Activated T-helper 2 cell treated with anti-CD3 and anti-CD28 coated beads, Interferon-gamma antibody, Interleukin-2, Interleukin-4, amounts not matched to agents 10 μg/mL and 5 μg/mL and 100 μg/mL, durations not matched to agents 14 hours and 24 hours and 36 hours (primary cell): ENCODE measurements at regions of chr5 and their contacts with region 1.

Region 1: DNA sequence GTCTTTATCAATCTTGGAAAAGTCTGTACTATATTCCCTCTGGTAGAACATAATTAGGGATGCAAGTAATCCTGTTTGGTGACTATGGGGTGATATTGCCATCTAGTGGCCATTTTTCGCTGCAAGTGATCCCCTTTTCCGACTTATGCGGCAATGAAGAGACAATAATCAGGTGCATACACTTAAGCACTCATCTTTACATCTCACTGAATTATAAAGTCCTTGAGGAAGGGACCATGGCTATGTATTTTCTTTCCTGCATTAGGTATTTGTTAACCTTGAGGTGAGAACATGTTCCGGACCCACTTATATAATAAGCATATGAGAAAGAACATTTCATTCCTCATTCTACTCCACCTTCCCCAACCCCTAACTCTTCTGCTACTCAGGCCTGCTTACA is 19.6 kb upstream of the LIX1 start:
- DNase-seq: peak; percentile 28
- H3K4me3 Mint-ChIP-seq: no peak overlapping the region
- H3K27ac Mint-ChIP-seq: no peak overlapping the region
- H3K4me1 Mint-ChIP-seq: peaks cover 16% of the 10 kb centered on the region
- H3K27me3 Mint-ChIP-seq: no peaks in the 10 kb centered on the region

Region 2: GRCh38 chr5:96614110-96614691 is 547.8 kb before region 1 on chr5:
- intact Hi-C with region 1: loop called (anchors 5 kb)
- DNase-seq: no peak
- H3K4me3 Mint-ChIP-seq: no peak overlapping the region
- H3K27ac Mint-ChIP-seq: no peak overlapping the region
- H3K4me1 Mint-ChIP-seq: peaks cover 6% of the 10 kb centered on the region
- H3K27me3 Mint-ChIP-seq: peaks cover 58% of the 10 kb centered on the region

Region 3: DNA sequence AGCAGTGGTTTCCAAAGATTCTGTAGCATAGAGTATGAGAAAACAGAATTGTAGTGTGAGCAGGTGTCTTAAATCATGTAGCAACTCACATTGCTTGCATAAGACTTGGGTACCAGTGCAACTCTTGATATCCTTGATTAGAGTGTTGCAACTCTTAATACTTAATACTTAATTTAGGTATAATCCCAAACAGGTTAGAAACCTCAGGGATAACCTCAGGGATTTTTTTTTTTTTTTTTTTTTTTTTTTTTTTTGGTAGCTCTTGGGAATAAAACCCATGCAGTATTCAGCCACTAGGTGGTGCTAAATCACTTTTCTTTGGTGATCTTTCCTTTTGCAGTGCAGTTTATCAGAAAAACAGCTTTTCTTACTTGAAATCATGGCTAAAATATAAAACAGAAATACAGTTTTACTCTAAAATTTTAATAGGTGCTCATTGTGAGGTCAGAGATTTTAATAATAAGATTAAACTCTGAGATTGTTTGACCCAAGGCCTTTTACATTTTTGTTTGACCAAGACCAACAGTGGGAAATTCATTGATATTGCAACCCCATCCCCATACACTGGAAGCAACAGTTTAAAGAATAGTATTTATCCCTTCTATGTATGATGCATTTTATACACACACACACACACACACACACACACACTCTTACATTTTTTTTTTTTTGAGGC is 409.6 kb before region 1 on chr5:
- intact Hi-C with region 1: loop called (anchors 1 kb)
- DNase-seq: no peak
- H3K4me3 Mint-ChIP-seq: no peak overlapping the region
- H3K27ac Mint-ChIP-seq: no peak overlapping the region
- H3K4me1 Mint-ChIP-seq: no peaks in the 10 kb centered on the region
- H3K27me3 Mint-ChIP-seq: no peaks in the 10 kb centered on the region

Region 4: DNA sequence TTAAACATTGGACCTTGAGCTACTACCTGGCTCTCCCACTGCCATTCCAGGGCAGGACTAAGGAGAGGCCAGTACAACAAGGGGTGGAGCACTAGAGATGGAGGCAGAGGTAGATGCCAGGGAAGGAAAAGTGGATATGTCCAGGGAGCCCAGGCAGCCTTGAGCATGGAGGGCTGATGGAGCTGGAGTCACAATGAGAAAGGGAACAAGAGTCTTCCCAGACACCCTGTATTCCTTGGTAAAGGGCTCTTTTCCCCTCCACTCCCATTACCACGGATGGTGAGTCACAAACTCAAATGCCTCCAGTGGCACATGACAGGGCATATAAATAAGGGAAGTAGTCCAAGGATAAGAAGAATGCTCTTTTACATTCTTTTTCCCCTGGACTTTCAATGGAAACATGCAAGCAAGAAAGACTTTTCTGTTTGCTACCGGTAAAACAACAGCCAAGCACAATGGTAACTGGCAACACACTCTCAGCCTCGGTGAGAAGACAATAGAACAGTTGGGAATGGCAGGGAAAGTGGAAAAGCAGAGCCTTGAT is 371.0 kb before region 1 on chr5:
- intact Hi-C with region 1: loop called (anchors 5 kb)
- DNase-seq: no peak
- H3K4me3 Mint-ChIP-seq: no peak overlapping the region
- H3K27ac Mint-ChIP-seq: no peak overlapping the region
- H3K4me1 Mint-ChIP-seq: peaks cover 15% of the 10 kb centered on the region
- H3K27me3 Mint-ChIP-seq: no peaks in the 10 kb centered on the region

Region 5: DNA sequence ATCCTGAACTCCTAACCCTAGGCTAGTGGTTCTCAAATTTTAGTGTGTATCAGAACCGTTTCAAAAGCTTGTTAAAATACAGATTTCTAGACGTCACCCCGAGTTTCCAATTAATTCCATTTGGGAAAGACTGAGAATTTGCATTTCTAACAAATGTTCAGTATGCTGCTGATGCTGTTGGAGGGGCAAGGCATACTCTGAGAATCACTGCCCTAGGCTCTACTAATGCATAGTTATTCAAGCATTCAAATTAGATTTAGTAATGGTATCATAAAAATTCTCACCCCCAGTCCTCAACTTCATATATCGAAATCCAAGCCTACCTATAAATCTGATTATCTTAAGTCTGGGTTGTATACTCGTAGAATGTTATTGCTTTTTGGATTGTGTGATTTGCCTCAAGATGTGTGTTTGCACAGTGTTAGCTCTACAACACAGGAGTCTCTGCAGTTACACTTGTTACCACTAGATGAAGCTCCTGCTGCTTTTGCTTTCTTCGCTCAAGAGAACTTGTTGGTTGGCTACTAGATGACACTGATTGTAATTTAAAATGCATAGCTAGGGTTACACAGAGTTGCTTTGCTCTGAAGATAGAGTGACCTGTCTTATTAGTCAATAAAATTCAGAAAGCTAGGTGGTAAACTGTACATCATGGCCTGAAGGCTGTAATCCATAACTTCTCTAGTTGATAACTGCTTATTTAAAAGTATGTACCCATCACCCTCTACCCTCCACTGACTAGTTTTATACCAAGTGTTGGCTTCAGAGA is 293.3 kb before region 1 on chr5:
- intact Hi-C with region 1: loop called (anchors 1 kb)
- DNase-seq: no peak
- H3K4me3 Mint-ChIP-seq: no peak overlapping the region
- H3K27ac Mint-ChIP-seq: no peak overlapping the region
- H3K4me1 Mint-ChIP-seq: peaks cover 54% of the 10 kb centered on the region
- H3K27me3 Mint-ChIP-seq: no peaks in the 10 kb centered on the region

Region 6: GRCh38 chr5:96997265-96997859 is 164.7 kb before region 1 on chr5:
- intact Hi-C with region 1: loop called (anchors 2 kb)
- DNase-seq: no peak
- H3K4me3 Mint-ChIP-seq: no peak overlapping the region
- H3K27ac Mint-ChIP-seq: no peak overlapping the region
- H3K4me1 Mint-ChIP-seq: peaks cover 29% of the 10 kb centered on the region
- H3K27me3 Mint-ChIP-seq: no peaks in the 10 kb centered on the region

Region 7: GRCh38 chr5:97245386-97245785 is 83.3 kb after region 1 on chr5:
- intact Hi-C with region 1: no loop called
- DNase-seq: no peak
- H3K4me3 Mint-ChIP-seq: no peak overlapping the region
- H3K27ac Mint-ChIP-seq: no peak overlapping the region
- H3K4me1 Mint-ChIP-seq: no peaks in the 10 kb centered on the region
- H3K27me3 Mint-ChIP-seq: no peaks in the 10 kb centered on the region